ENCODE measurements at regions of chr4 and their contacts with region 1.

Region 1: DNA sequence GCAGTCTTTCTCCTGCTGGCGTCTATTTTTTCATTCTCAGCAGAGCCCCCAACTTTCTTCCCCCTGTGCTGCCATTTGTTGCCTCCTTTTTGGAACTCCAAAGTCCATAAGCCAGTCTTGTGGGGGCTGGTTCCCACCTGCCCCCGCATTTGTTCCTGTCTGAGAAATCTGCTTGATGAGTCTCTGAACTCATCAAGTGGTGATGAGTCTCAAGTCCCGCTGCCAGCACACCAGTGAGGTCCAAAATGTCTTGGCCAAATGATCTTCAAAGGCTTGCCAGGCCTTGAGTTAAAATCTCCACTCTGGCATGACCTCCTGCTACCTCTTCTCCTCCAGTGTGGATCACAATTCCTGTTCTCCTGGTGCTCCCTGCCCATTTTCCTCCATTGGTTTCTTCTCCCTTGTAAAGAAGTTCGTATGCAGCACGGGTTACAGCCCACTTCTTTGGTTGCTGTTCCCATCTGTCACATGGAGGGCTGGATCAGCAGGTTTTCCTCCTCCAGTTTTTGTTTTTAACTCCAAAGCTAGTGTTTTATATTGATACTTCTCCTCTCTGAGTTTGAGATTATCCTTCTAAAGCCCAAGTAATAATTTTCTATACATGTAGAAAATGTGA is 72.7 kb upstream of the LIMCH1 start:
- DNase-seq: no peak
- ATAC-seq: peak; percentile 42 to 44
- H3K4me3 ChIP-seq: no peak overlapping the region
- H3K27ac ChIP-seq: peak overlapping the region in 1 of 4 donors; percentile 28
- H3K4me1 ChIP-seq: peaks cover 40 to 49% of the 10 kb centered on the region in 2 donors
- H3K27me3 ChIP-seq: no peaks in the 10 kb centered on the region
- CTCF ChIP-seq: no peak
- POLR2A ChIP-seq: no peak

Region 2: DNA sequence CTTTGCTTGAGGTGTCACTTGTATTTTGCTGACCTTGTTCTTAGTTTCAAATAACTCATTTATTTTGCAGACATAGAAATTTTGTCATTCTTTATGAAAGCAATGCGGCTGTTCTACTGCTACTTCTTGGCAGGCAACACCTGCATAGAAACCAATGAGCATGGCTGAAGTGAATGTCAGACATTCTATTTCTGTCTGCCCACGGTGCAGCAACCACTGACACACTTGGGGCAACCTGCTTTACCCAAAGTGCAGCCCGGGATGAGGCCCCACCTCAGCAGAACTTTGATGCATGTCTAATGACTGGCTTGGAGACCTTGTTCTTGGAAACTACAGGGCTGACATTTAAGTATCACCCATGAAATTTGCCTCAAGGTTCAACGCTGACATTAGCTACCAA is 929.2 kb before region 1 on chr4:
- in situ Hi-C with region 1: no loop called
- intact Hi-C with region 1: no loop called
- DNase-seq: no peak
- ATAC-seq: no peak
- H3K4me3 ChIP-seq: no peak overlapping the region
- H3K27ac ChIP-seq: no peak overlapping the region
- H3K4me1 ChIP-seq: no peaks in the 10 kb centered on the region
- H3K27me3 ChIP-seq: no peaks in the 10 kb centered on the region
- CTCF ChIP-seq: no peak
- POLR2A ChIP-seq: no peak

Region 3: DNA sequence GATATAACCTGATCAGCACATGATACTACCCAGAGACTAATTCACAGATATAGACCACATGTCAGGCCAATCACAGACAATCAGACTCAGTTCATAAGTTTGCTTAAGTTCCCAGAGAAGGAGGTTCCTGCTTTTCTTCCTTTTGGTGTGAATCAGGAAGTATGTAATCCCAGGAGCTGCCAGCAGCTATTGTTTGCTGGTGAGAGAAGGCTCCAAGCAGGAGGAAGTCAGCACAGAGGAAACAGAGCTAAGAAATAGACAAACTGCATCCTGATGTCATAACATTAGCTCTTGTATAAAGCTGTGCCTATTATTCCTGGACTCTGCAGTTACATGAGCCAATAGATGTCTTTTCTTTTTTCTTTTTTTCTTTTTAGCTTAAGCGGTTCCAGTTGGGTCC is 157.6 kb before region 1 on chr4:
- in situ Hi-C with region 1: no loop called
- intact Hi-C with region 1: no loop called
- DNase-seq: no peak
- ATAC-seq: no peak
- H3K4me3 ChIP-seq: no peak overlapping the region
- H3K27ac ChIP-seq: no peak overlapping the region
- H3K4me1 ChIP-seq: peaks cover 5 to 10% of the 10 kb centered on the region in 2 donors
- H3K27me3 ChIP-seq: no peaks in the 10 kb centered on the region
- CTCF ChIP-seq: no peak
- POLR2A ChIP-seq: no peak

Region 4: DNA sequence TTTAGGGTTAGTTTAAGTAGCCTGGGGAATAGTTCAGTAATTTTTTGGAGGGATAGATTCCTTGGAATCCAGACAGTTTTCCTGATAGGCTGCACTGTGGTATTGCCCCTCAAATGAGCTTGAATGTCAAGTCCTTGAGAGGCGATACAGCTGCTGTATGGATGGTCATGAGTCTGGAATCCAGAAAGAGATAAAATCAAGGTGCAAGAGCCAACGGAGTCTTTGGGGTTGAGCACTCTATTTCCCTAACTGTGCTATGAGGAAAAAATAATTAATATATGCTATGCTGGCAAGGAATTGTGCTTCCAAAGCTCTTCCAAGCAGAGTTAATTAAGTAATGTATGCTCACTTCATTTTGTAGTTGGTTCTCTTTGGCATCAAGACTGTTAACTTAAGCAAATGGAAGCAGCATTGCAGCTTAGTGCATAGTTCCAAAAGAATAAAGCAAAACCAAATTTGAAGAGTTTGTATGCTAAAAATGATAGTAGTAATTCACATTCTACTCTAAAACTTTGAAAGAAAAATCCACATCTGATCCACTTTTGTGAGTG is 121.5 kb after region 1 on chr4:
- in situ Hi-C with region 1: no loop called
- intact Hi-C with region 1: loop called (anchors 5 kb)
- DNase-seq: no peak
- ATAC-seq: no peak
- H3K4me3 ChIP-seq: no peak overlapping the region
- H3K27ac ChIP-seq: no peak overlapping the region
- H3K4me1 ChIP-seq: peaks cover 33 to 49% of the 10 kb centered on the region in 2 donors
- H3K27me3 ChIP-seq: no peaks in the 10 kb centered on the region
- CTCF ChIP-seq: no peak
- POLR2A ChIP-seq: no peak

Region 5: GRCh38 chr4:41990365-41991111 is 525.3 kb after region 1 on chr4 and contains the start of gene SLC30A9:
- in situ Hi-C with region 1: no loop called
- intact Hi-C with region 1: no loop called
- DNase-seq: peak; percentile 93
- ATAC-seq: peak; percentile 99 to 100
- H3K4me3 ChIP-seq: peak within 1 kb of the TSS; percentile 91 to 98 (median 94)
- H3K27ac ChIP-seq: peak within 1 kb of the TSS; percentile 81 to 90 (median 86)
- H3K4me1 ChIP-seq: peaks cover 43 to 45% of the 10 kb centered on the region in 2 donors
- H3K27me3 ChIP-seq: no peaks in the 10 kb centered on the region
- CTCF ChIP-seq: peak; percentile 29 to 60 (median 45)
- POLR2A ChIP-seq: peak; percentile 75 to 81
- total RNA-seq, gene SLC30A9: 24.5 to 35.6 (median 27.3) TPM

Measured in gastrocnemius medialis (tissue), 4 donors.